Naive thymus-derived CD4-positive, alpha-beta T cell (primary cell): ENCODE measurements at regions of chr2 and their contacts with region 1.

Region 1: GRCh38 chr2:100902833-100903405 is 83.0 kb downstream of the NPAS2 start:
- DNase-seq: no peak
- ATAC-seq: no peak
- H3K4me3 ChIP-seq: no peak overlapping the region
- H3K4me3 Mint-ChIP-seq: no peak overlapping the region
- H3K27ac ChIP-seq: no peak overlapping the region
- H3K27ac Mint-ChIP-seq: no peak overlapping the region
- H3K4me1 ChIP-seq: no peaks in the 10 kb centered on the region
- H3K4me1 Mint-ChIP-seq: peaks cover 4 to 34% (median 24%) of the 10 kb centered on the region in 7 donors
- H3K27me3 ChIP-seq: no peaks in the 10 kb centered on the region
- H3K27me3 Mint-ChIP-seq: peaks cover 0 to 10% (median 0%) of the 10 kb centered on the region in 5 donors

Region 2: GRCh38 chr2:100877555-100877954 is 25.4 kb before region 1 on chr2:
- CTCF ChIA-PET with region 1: no interaction called
- POLR2A ChIA-PET with region 1: no interaction called
- intact Hi-C with region 1: loop called in 1 of 2 experiments (anchors 1 kb)
- DNase-seq: no peak
- ATAC-seq: no peak
- H3K4me3 ChIP-seq: no peak overlapping the region
- H3K4me3 Mint-ChIP-seq: no peak overlapping the region
- H3K27ac ChIP-seq: no peak overlapping the region
- H3K27ac Mint-ChIP-seq: no peak overlapping the region
- H3K4me1 ChIP-seq: peaks cover 0 to 5% of the 10 kb centered on the region in 2 donors
- H3K4me1 Mint-ChIP-seq: peaks cover 7 to 46% (median 15%) of the 10 kb centered on the region in 7 donors
- H3K27me3 ChIP-seq: no peaks in the 10 kb centered on the region
- H3K27me3 Mint-ChIP-seq: no peaks in the 10 kb centered on the region

Region 3: DNA sequence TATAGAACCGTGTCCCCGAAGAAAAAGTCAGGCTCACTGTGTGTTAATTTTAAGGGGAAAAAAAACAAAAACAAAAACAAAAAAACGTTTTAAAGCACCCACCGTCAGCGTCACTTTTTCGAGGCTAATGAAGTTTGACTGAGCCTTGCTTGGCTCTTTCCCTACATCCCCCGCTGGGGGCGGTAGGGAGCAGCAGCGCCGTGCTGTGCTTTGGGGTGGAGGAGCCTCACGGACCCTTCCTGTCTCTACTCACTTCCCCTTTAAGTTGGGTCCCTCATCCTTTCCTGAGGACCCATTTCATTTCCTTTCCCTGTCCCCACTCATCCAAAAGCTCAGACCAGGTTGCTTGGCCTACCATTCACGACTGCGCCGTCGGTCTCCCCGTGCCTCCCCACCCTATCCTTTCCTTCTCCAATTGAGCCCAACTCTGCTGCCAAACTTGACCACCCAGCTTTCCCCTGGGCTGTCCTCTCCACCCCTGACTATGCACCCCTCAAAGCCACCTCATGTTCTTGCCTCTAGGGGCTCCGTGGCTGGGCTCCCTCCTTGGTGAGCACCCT is 16.5 kb after region 1 on chr2:
- CTCF ChIA-PET with region 1: no interaction called
- POLR2A ChIA-PET with region 1: no interaction called
- intact Hi-C with region 1: no loop called
- DNase-seq: peak in 1 of 9 donors; percentile 21
- ATAC-seq: no peak
- H3K4me3 ChIP-seq: no peak overlapping the region
- H3K4me3 Mint-ChIP-seq: no peak overlapping the region
- H3K27ac ChIP-seq: no peak overlapping the region
- H3K27ac Mint-ChIP-seq: peak overlapping the region in 1 of 9 donors; percentile 87
- H3K4me1 ChIP-seq: no peaks in the 10 kb centered on the region
- H3K4me1 Mint-ChIP-seq: peaks cover under 1 to 23% (median 11%) of the 10 kb centered on the region in 7 donors
- H3K27me3 ChIP-seq: no peaks in the 10 kb centered on the region
- H3K27me3 Mint-ChIP-seq: peaks cover 0 to 4% (median 0%) of the 10 kb centered on the region in 5 donors